Heart right ventricle (tissue), 16 donors: ENCODE measurements at regions of chr1 and their contacts with region 1.

Region 1: GRCh38 chr1:176903474-176903873 is 261.0 kb downstream of the ASTN1 start:
- DNase-seq: no peak
- ATAC-seq: no peak
- H3K4me3 ChIP-seq: peak overlapping the region in 1 of 10 donors; percentile 32
- H3K27ac ChIP-seq: no peak overlapping the region
- H3K4me1 ChIP-seq: peaks cover 0 to 17% (median 6%) of the 10 kb centered on the region in 9 donors
- H3K27me3 ChIP-seq: peaks cover 0 to 29% (median 20%) of the 10 kb centered on the region in 7 donors
- CTCF ChIP-seq: no peak

Region 2: DNA sequence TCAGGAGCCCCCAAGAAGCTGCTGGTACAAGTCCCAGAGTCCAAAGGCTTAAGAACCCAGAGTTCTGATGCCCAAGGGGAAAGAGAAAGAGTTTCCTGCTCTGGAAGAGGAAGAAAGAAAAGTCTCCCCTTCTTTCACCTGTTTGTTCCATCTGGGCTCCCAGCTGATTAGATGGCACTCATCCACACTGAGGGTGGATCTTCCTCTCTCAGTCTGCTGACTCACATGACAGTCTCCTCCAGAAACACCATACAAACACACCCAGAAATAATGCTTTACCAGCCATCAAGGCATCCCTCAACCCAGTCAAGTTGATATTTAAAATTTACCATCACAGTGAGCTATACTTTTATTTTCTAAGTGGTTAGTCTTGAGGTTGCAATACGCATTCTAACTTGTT is 182.6 kb before region 1 on chr1:
- intact Hi-C with region 1: no loop called
- DNase-seq: no peak
- ATAC-seq: no peak
- H3K4me3 ChIP-seq: no peak overlapping the region
- H3K27ac ChIP-seq: no peak overlapping the region
- H3K4me1 ChIP-seq: peaks cover 0 to 8% (median 0%) of the 10 kb centered on the region in 9 donors
- H3K27me3 ChIP-seq: no peaks in the 10 kb centered on the region
- CTCF ChIP-seq: no peak

Region 3: DNA sequence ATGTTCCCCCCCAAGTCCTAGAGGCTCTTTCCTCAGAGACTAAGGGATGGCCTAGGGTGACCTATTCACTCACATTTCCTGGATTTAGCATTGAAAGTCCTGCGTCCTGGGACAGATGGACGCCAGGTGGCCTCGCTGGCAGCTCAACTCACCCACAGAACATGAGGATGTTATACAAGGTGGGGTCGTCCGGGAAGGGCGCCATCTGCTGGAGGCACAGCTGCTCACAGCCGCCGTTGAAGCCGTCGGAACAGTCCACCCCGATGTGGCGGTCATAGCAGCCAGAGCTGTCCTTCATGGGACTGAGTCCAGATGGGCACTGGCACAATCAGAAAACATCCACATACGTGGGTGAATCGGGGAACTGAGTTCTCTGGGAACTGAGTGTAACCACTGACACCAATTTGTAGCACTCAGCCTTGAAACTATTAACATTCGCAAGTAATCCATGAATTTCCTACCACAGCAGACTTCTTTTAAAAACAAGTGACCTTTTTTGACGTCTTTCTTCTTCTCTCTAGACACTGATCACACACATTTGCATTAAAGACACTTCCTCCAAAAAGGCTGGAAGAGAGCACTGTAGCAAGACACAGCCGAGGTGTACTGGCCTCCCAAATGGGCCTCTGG is 45.7 kb after region 1 on chr1:
- intact Hi-C with region 1: loop called in 3 of 10 experiments (anchors 5 kb)
- DNase-seq: peak; percentile 26 to 47
- ATAC-seq: peak; percentile 28 to 87 (median 60)
- H3K4me3 ChIP-seq: no peak overlapping the region
- H3K27ac ChIP-seq: no peak overlapping the region
- H3K4me1 ChIP-seq: no peaks in the 10 kb centered on the region
- H3K27me3 ChIP-seq: no peaks in the 10 kb centered on the region
- CTCF ChIP-seq: peak in 8 of 9 donors; percentile 14 to 62 (median 56)

Region 4: DNA sequence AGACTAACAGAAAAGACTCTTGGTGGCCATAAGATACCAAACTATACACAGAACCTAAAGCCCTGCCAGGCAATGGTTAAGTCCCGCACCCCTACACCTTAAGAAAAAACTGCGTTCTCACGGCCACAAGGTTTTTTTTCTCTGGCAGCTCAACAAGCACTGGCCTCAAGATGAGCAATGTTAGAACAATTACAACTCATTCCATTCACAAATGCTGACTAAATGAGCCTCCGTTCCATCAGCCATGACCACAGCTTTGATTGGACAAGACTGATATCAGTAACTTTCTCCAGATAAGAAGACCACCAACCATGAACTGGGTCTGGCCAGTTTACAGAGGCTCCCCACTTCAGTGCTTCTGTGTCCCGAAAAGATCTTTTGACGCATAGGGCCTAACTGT is 1034.5 kb after region 1 on chr1:
- intact Hi-C with region 1: loop called in 5 of 10 experiments (anchors 5 to 10 kb)
- DNase-seq: no peak
- ATAC-seq: no peak
- H3K4me3 ChIP-seq: no peak overlapping the region
- H3K27ac ChIP-seq: no peak overlapping the region
- H3K4me1 ChIP-seq: peaks cover 0 to 10% (median 0%) of the 10 kb centered on the region in 9 donors
- H3K27me3 ChIP-seq: no peaks in the 10 kb centered on the region
- CTCF ChIP-seq: no peak

Region 5: GRCh38 chr1:177948336-177948972 is 1045.0 kb after region 1 on chr1:
- intact Hi-C with region 1: loop called in 6 of 10 experiments (anchors 5 to 10 kb)
- DNase-seq: peak in 1 of 2 donors; percentile 46
- ATAC-seq: peak in 7 of 8 donors; percentile 45 to 77 (median 56)
- H3K4me3 ChIP-seq: no peak overlapping the region
- H3K27ac ChIP-seq: no peak overlapping the region
- H3K4me1 ChIP-seq: peaks cover 0 to 10% (median 0%) of the 10 kb centered on the region in 9 donors
- H3K27me3 ChIP-seq: no peaks in the 10 kb centered on the region
- CTCF ChIP-seq: peak; percentile 77 to 91 (median 89)

Region 6: GRCh38 chr1:178196631-178197030 is 1293.2 kb after region 1 on chr1:
- intact Hi-C with region 1: no loop called
- DNase-seq: no peak
- ATAC-seq: no peak
- H3K4me3 ChIP-seq: no peak overlapping the region
- H3K27ac ChIP-seq: no peak overlapping the region
- H3K4me1 ChIP-seq: peaks cover 0 to 24% (median 11%) of the 10 kb centered on the region in 9 donors
- H3K27me3 ChIP-seq: no peaks in the 10 kb centered on the region
- CTCF ChIP-seq: no peak